B cell (primary cell): ENCODE measurements at regions of chr7 and their contacts with region 1.

Region 1: DNA sequence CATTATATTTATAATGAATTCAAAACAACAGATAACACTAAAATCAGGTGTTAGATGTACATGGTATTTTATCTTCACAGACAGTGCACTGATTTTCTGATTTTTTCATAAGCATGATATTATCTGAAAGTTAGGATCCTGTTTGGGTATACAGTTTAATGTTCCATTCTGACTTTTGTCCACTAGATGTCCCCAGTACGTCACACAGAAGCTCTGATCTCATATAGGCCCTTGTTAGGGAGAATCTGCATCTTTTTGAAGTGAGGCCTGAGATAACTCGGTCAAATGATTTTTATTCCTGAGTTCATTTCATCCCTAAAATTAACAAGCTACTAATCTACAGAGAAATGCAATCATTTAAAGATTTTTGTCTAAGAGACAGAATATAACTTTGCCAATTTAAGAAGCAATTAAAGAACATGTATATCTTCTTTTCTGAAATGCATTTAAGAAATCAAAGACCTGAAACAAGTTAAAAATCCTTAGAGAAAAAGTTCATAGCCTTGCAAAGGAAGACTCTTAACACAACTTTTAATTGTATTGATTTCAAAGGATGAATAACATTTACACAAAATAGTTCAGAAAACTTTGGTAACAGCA is 72.0 kb upstream of the TES start:
- DNase-seq: peak; percentile 74
- ATAC-seq: peak; percentile 85
- H3K4me3 ChIP-seq: no peak overlapping the region
- H3K4me3 Mint-ChIP-seq: no peak overlapping the region
- H3K27ac ChIP-seq: no peak overlapping the region
- H3K27ac Mint-ChIP-seq: no peak overlapping the region
- H3K4me1 ChIP-seq: peaks cover 6 to 7% of the 10 kb centered on the region in 2 donors
- H3K4me1 Mint-ChIP-seq: peaks cover 23% of the 10 kb centered on the region
- H3K27me3 ChIP-seq: no peaks in the 10 kb centered on the region
- H3K27me3 Mint-ChIP-seq: no peaks in the 10 kb centered on the region
- CTCF ChIP-seq: peak; percentile 89

Region 2: DNA sequence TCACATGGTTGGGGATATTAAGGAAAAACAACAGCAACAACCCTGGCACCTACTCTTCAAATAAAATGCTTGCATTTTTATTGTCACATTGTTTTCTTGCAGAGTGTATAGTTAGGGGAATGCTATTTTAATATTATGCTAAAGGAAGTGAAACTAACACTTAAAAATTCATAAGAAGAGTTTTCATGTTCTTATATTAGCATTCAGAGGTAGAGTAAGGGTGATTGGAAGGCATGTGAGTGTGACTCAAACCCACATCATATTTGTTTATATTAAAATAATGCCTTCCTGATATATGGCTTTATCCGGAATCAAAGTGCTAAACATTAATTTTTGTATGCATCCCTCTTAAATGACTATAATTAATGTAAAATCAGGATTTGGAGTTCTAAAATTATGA is 12.3 kb after region 1 on chr7:
- CTCF ChIA-PET with region 1: interaction called, 7 read pairs
- POLR2A ChIA-PET with region 1: no interaction called
- intact Hi-C with region 1: loop called (anchors 1 kb)
- DNase-seq: peak; percentile 54
- ATAC-seq: peak; percentile 74
- H3K4me3 ChIP-seq: peak overlapping the region in 1 of 5 experiments; percentile 13
- H3K4me3 Mint-ChIP-seq: peak overlapping the region; percentile 84
- H3K27ac ChIP-seq: no peak overlapping the region
- H3K27ac Mint-ChIP-seq: peak overlapping the region; percentile 11
- H3K4me1 ChIP-seq: peaks cover 19 to 28% of the 10 kb centered on the region in 2 donors
- H3K4me1 Mint-ChIP-seq: peaks cover 57% of the 10 kb centered on the region
- H3K27me3 ChIP-seq: no peaks in the 10 kb centered on the region
- H3K27me3 Mint-ChIP-seq: no peaks in the 10 kb centered on the region
- CTCF ChIP-seq: no peak

Region 3: GRCh38 chr7:116543664-116544063 is 405.4 kb after region 1 on chr7:
- CTCF ChIA-PET with region 1: no interaction called
- POLR2A ChIA-PET with region 1: no interaction called
- intact Hi-C with region 1: no loop called
- DNase-seq: no peak
- ATAC-seq: no peak
- H3K4me3 ChIP-seq: no peak overlapping the region
- H3K4me3 Mint-ChIP-seq: no peak overlapping the region
- H3K27ac ChIP-seq: no peak overlapping the region
- H3K27ac Mint-ChIP-seq: no peak overlapping the region
- H3K4me1 ChIP-seq: peaks cover 5 to 6% of the 10 kb centered on the region in 2 donors
- H3K4me1 Mint-ChIP-seq: peaks cover 6% of the 10 kb centered on the region
- H3K27me3 ChIP-seq: no peaks in the 10 kb centered on the region
- H3K27me3 Mint-ChIP-seq: peaks cover 18% of the 10 kb centered on the region
- CTCF ChIP-seq: no peak

Region 4: GRCh38 chr7:116843378-116843777 is 705.1 kb after region 1 on chr7:
- CTCF ChIA-PET with region 1: no interaction called
- POLR2A ChIA-PET with region 1: no interaction called
- intact Hi-C with region 1: no loop called
- DNase-seq: peak; percentile 41
- ATAC-seq: peak; percentile 63
- H3K4me3 ChIP-seq: peak overlapping the region in 4 of 5 experiments; percentile 7 to 48 (median 33)
- H3K4me3 Mint-ChIP-seq: peak overlapping the region; percentile 84
- H3K27ac ChIP-seq: peak overlapping the region; percentile 11 to 58
- H3K27ac Mint-ChIP-seq: peak overlapping the region; percentile 80
- H3K4me1 ChIP-seq: peaks cover 26 to 27% of the 10 kb centered on the region in 2 donors
- H3K4me1 Mint-ChIP-seq: peaks cover 25% of the 10 kb centered on the region
- H3K27me3 ChIP-seq: no peaks in the 10 kb centered on the region
- H3K27me3 Mint-ChIP-seq: no peaks in the 10 kb centered on the region
- CTCF ChIP-seq: no peak